ENCODE measurements at regions of chr5 and their contacts with region 1.

Region 1: DNA sequence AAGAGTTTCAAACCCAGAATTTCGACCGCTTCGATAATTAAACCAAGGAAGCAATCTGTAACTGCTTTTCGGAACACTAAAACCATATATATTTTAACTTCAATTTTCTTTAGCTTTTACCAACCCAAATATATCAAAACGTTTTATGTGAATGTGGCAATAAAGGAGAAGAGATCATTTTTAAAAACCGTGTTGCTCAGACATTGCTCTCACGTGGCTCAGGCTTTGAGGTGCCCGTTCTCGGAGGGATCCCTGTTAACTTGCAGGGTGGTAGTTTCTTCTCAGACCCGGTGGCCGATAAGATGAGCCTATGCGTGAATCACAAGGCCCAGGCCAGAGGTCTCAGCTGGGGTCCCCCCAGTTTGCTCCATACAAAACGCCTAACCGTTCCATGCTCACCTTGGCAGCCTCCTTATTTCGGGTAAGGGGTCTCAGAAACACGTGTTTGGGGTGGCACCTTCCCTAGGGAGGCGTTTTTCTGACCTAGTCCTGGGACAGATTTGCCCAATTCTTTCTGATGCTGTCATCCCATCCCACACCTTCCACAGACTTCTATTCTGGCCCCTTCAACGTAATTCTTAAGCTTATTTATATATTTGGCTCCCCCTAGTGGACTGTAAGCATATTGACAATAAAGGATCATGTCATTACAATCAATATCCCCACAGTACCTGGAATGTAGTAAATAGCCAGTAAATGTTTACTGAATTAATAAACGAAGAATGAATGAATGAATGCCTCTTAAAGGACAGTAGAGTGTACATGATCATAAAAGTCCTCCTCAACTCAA is 48.1 kb downstream of the THBS4 start:
- DNase-seq: peak; percentile 74 to 82
- ATAC-seq: peak; percentile 84 to 91
- H3K4me3 ChIP-seq: peak overlapping the region; percentile 38
- H3K27ac ChIP-seq: peak overlapping the region; percentile 11 to 65; a peak in 4 of 6 replicates
- H3K4me1 ChIP-seq: no peaks in the 10 kb centered on the region
- CTCF ChIP-seq: peak; percentile 73
- EP300 ChIP-seq: no peak
- POLR2A ChIP-seq: no peak
- RAD21 ChIP-seq: peak; percentile 67 to 72

Region 2: DNA sequence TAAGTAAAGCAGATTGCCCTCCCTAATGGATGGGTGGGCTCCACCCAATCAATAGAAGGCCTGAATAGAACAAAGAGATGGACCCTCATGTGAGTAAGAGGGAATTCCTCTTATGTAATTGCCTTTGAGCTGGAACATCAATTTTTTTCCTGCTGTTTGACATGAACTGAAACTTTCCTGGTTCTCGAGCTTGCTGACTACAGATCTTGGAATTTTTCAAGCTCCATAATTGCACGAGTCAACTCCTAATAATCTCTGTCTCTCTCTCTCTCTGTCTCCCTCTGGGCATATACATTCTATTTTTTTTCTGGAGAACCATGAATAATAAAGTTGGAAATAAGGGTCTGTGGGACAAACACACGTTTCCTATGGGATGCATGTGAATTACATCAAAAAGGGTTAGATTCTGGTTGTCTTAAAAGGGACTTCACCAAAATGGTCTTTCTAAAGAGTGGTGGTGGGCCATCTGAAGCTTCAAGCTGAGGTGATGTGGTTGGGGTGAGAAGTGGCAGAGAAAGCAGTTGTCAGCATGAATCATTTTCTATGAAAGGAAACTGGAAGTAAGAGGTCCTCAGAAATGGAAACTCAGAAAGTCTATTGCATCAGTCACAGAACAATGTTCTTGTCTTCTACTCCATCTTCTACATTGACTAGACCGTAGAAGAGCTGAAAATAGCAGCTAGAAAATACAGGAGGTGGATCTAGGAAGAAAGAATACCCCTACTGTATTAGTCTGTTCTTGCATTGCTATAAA is 522.3 kb before region 1 on chr5:
- CTCF ChIA-PET with region 1: interaction called, 12 read pairs
- POLR2A ChIA-PET with region 1: no interaction called
- DNase-seq: no peak
- ATAC-seq: no peak
- H3K4me3 ChIP-seq: no peak overlapping the region
- H3K27ac ChIP-seq: no peak overlapping the region
- H3K4me1 ChIP-seq: no peaks in the 10 kb centered on the region
- CTCF ChIP-seq: no peak
- EP300 ChIP-seq: no peak
- POLR2A ChIP-seq: no peak
- RAD21 ChIP-seq: no peak

Region 3: DNA sequence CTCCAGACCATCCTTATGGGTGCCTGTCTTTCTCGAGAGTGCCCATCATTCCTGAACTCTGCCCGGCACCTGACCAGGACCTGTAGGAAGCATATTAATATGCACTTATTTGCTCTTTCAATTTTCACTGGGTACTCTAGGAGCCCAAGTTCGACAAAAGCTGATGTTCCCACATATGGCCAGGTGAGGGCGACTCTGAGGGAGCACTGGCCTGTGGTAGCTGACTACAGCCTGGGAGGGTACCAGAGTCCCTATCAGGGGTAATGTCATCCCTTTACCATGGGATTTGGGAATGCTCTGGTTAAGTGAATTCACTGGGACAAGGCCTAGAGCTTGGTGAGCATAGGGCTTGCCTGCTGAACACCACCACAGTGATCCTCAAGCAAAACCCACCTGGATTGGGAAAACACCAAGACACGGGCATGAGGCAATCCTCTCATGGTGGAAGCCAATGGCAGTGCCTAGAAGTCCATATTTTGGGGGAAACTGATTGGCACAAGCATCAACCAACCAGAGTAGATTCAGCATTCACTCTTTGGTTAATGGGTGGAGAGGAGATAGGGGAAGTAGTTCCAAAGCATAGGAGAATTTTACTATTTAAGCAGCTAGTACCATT is 204.5 kb before region 1 on chr5:
- CTCF ChIA-PET with region 1: interaction called, 18 read pairs
- POLR2A ChIA-PET with region 1: no interaction called
- DNase-seq: peak; percentile 11 to 21
- ATAC-seq: peak; percentile 55 to 81; a peak in 3 of 6 replicates
- H3K4me3 ChIP-seq: no peak overlapping the region
- H3K27ac ChIP-seq: no peak overlapping the region
- H3K4me1 ChIP-seq: no peaks in the 10 kb centered on the region
- CTCF ChIP-seq: 0 out of 3 replicates have a peak, but pooled peaks have one; percentile 18
- EP300 ChIP-seq: no peak
- POLR2A ChIP-seq: no peak
- RAD21 ChIP-seq: peak in 1 of 2 experiments; percentile 29; a peak in 1 of 5 replicates

Region 4: GRCh38 chr5:79890119-79890870 is 193.0 kb before region 1 on chr5:
- CTCF ChIA-PET with region 1: no interaction called
- POLR2A ChIA-PET with region 1: no interaction called
- DNase-seq: no peak
- ATAC-seq: no peak
- H3K4me3 ChIP-seq: no peak overlapping the region
- H3K27ac ChIP-seq: no peak overlapping the region
- H3K4me1 ChIP-seq: no peaks in the 10 kb centered on the region
- CTCF ChIP-seq: no peak
- EP300 ChIP-seq: no peak
- POLR2A ChIP-seq: no peak
- RAD21 ChIP-seq: no peak

Region 5: DNA sequence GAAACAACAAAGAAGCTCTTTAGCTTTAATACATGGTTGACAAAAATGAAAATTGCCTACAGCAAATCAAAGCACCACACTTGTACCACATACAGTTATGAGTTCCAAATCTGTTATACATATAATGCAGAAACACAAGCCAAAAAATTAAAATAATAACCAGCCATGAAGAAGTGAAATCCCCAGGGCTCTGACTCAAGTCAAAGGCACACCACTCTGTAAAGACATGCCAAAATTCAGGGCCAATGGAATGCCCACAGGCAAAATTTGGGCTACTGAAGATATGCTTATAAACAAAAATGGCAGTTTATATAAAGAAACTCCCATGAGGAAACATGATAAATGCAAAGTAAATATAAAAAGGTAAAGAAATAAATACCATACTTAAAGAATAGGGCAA is 19.2 kb before region 1 on chr5:
- CTCF ChIA-PET with region 1: interaction called, 10 read pairs
- POLR2A ChIA-PET with region 1: no interaction called
- DNase-seq: no peak
- ATAC-seq: no peak
- H3K4me3 ChIP-seq: no peak overlapping the region
- H3K27ac ChIP-seq: no peak overlapping the region
- H3K4me1 ChIP-seq: no peaks in the 10 kb centered on the region
- CTCF ChIP-seq: no peak
- EP300 ChIP-seq: no peak
- POLR2A ChIP-seq: no peak
- RAD21 ChIP-seq: no peak

Region 6: GRCh38 chr5:80072103-80073073 is 10.9 kb before region 1 on chr5:
- CTCF ChIA-PET with region 1: interaction called, 21 read pairs
- POLR2A ChIA-PET with region 1: no interaction called
- DNase-seq: no peak
- ATAC-seq: no peak
- H3K4me3 ChIP-seq: no peak overlapping the region
- H3K27ac ChIP-seq: no peak overlapping the region
- H3K4me1 ChIP-seq: no peaks in the 10 kb centered on the region
- CTCF ChIP-seq: no peak
- EP300 ChIP-seq: no peak
- POLR2A ChIP-seq: no peak
- RAD21 ChIP-seq: no peak

Region 7: GRCh38 chr5:80101993-80102392 is 18.7 kb after region 1 on chr5:
- CTCF ChIA-PET with region 1: interaction called, 43 read pairs
- POLR2A ChIA-PET with region 1: no interaction called
- DNase-seq: no peak
- ATAC-seq: no peak
- H3K4me3 ChIP-seq: no peak overlapping the region
- H3K27ac ChIP-seq: no peak overlapping the region
- H3K4me1 ChIP-seq: no peaks in the 10 kb centered on the region
- CTCF ChIP-seq: no peak
- EP300 ChIP-seq: no peak
- POLR2A ChIP-seq: no peak
- RAD21 ChIP-seq: no peak

Region 8: DNA sequence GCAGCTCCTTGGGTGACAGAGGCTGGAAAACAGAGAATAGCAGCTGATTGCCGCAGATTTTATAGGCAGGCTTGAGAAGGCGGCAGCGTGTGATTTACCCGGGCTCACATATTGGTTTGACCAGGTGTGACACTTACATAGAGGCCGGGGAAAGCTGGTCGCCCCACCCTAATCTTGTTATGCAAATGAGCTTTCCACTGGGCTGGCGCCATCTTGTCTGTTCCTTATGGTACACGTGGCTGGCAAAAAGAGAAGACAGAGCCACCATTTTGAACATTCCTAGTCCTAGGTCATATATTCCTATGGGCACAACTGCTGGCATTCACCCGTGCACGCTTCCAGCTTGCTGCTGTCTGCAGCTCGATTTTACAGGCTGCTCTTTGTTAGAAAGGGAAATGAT is 225.2 kb after region 1 on chr5:
- CTCF ChIA-PET with region 1: interaction called, 51 read pairs
- POLR2A ChIA-PET with region 1: no interaction called
- DNase-seq: peak in 1 of 2 experiments; percentile 18
- ATAC-seq: no peak
- H3K4me3 ChIP-seq: no peak overlapping the region
- H3K27ac ChIP-seq: no peak overlapping the region
- H3K4me1 ChIP-seq: no peaks in the 10 kb centered on the region
- CTCF ChIP-seq: no peak
- EP300 ChIP-seq: no peak
- POLR2A ChIP-seq: no peak
- RAD21 ChIP-seq: no peak